Aorta (tissue), 5 donors: ENCODE measurements at regions of chr1 and their contacts with region 1.

Region 1: GRCh38 chr1:74197657-74198552 is at the starts of genes FPGT and LRRIQ3:
- DNase-seq: peak; percentile 97 to 99
- ATAC-seq: peak; percentile 100
- H3K4me3 ChIP-seq: peak within 1 kb of the TSS; percentile 78 to 91
- H3K27ac ChIP-seq: peak within 1 kb of the TSS in 1 of 2 donors; percentile 11
- H3K4me1 ChIP-seq: peaks cover 0 to 2% of the 10 kb centered on the region in 2 donors
- H3K27me3 ChIP-seq: no peaks in the 10 kb centered on the region
- total RNA-seq, gene FPGT: 16.4 to 19.7 TPM
- total RNA-seq, gene LRRIQ3: 0.36 to 0.81 TPM

Region 2: GRCh38 chr1:74468982-74469603 is 271.2 kb after region 1 on chr1:
- intact Hi-C with region 1: loop called in 1 of 2 experiments (anchors 5 kb)
- DNase-seq: no peak
- ATAC-seq: no peak
- H3K4me3 ChIP-seq: no peak overlapping the region
- H3K27ac ChIP-seq: no peak overlapping the region
- H3K4me1 ChIP-seq: peaks cover 0 to 2% of the 10 kb centered on the region in 2 donors
- H3K27me3 ChIP-seq: no peaks in the 10 kb centered on the region

Region 3: DNA sequence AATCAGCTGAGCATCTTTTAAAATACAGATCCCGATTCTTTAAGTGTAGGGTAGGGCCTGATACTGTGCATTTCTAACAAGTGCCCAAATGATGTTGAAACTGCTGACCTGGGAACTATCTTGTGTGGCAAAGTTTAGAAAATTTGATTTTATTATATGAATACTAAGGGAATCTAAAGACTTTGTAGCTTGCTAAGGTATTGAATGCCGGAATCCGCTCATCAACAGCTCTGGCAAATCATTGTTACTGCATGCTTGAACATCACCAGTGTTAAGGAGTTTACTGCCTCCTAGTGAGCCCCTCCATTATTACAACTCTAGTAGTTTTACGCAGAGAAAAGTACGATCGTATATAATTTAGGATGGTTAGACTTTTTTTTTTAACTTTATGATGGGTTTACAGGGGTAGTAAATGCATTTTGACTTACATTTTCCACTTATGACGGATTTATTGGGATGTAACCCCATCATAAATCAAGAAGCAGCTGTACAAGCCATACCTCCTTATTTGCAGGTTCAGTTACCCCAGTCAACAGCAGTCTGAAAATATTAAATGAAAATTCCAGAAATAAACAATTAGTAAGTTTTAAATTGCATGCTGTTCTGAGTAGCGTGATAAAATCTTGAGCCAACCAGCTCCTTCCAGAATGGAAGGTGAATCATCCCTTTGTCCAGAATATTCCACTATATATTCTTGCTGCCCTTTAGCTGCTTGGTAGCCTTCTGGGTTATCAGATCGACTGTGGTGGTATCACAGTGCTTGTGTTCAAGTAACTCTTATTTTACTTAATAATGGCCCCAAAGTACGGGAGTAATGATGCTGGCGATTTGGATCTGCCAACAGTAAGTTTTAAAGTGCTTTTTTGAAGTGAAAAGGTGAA is 535.9 kb after region 1 on chr1:
- intact Hi-C with region 1: loop called in 1 of 2 experiments (anchors 10 kb)
- DNase-seq: no peak
- ATAC-seq: peak; percentile 77
- H3K4me3 ChIP-seq: peak overlapping the region; percentile 81 to 94
- H3K27ac ChIP-seq: peak overlapping the region; percentile 21 to 96
- H3K4me1 ChIP-seq: peaks cover 9% of the 10 kb centered on the region in 2 donors
- H3K27me3 ChIP-seq: no peaks in the 10 kb centered on the region